ENCODE measurements at regions of chr1 and their contacts with region 1.

Region 1: DNA sequence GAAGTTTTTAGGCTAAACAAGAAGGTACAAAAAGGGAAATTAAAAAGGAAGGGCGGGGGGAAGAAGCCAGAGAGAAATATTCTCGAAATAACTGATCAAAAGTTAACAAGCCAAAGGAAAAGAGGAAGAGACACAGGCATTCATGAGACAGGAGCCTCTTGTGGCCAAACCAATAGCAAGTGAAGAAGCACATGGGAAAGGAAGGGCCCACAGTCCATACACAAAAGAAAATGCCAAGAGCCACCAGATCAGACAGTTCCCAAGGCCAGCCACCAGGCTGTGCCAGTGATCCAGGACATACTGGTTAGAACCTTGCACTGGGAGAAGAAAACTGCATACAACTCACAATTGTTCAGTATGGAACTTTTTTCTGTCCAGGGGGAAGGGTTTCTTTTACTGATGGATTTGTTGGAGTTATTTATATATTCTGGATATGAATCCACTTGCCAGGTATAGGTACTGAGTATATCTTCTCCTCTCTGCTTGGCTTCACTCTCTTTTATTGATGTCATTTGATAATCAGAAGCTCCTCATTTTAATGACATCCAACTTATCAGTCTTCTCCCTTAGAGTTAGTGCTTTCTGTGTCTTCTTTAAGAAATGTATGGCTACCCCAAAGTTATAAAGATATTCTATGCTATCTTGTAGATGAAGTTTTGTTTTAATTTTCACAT is 76.8 kb downstream of the CD46 start:
- DNase-seq: no peak
- ATAC-seq: no peak
- H3K4me3 Mint-ChIP-seq: peak overlapping the region; percentile 5
- H3K27ac Mint-ChIP-seq: peak overlapping the region; percentile 57
- H3K4me1 Mint-ChIP-seq: peaks cover 97% of the 10 kb centered on the region
- H3K27me3 Mint-ChIP-seq: peaks cover 2% of the 10 kb centered on the region
- CTCF ChIP-seq: no peak

Region 2: GRCh38 chr1:207097871-207098324 is 730.7 kb before region 1 on chr1:
- CTCF ChIA-PET with region 1: no interaction called
- POLR2A ChIA-PET with region 1: no interaction called
- intact Hi-C with region 1: no loop called
- DNase-seq: no peak
- ATAC-seq: peak; percentile 37
- H3K4me3 Mint-ChIP-seq: no peak overlapping the region
- H3K27ac Mint-ChIP-seq: no peak overlapping the region
- H3K4me1 Mint-ChIP-seq: no peaks in the 10 kb centered on the region
- H3K27me3 Mint-ChIP-seq: peaks cover 9% of the 10 kb centered on the region
- CTCF ChIP-seq: no peak

Region 3: DNA sequence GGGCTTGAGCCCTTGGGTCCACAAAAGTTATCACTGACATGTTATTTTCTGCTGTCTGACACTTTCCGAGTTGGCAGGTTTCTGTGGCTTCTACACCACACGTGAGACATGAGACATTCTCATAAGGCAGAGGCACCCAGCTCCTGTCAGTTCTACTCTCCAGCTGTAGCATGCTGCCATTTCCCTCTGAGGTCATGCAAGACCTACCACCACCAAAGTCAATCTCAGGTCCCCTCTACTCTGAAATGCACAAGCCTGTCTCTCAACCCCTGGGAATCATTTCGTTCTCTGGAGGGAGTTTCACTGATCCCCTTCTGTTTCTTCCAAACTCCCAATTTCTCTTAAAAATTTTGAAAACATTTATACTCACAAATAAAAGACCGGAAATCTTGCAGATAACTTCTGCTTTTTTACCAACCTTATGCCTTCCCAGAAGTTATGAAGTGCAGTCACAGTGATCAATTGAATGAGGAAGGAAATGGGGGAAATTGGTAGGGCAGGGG is 414.0 kb before region 1 on chr1:
- CTCF ChIA-PET with region 1: no interaction called
- POLR2A ChIA-PET with region 1: no interaction called
- intact Hi-C with region 1: loop called (anchors 10 kb)
- DNase-seq: no peak
- ATAC-seq: peak; percentile 76
- H3K4me3 Mint-ChIP-seq: peak overlapping the region; percentile 76
- H3K27ac Mint-ChIP-seq: peak overlapping the region; percentile 96
- H3K4me1 Mint-ChIP-seq: peaks cover 83% of the 10 kb centered on the region
- H3K27me3 Mint-ChIP-seq: no peaks in the 10 kb centered on the region
- CTCF ChIP-seq: no peak

Region 4: DNA sequence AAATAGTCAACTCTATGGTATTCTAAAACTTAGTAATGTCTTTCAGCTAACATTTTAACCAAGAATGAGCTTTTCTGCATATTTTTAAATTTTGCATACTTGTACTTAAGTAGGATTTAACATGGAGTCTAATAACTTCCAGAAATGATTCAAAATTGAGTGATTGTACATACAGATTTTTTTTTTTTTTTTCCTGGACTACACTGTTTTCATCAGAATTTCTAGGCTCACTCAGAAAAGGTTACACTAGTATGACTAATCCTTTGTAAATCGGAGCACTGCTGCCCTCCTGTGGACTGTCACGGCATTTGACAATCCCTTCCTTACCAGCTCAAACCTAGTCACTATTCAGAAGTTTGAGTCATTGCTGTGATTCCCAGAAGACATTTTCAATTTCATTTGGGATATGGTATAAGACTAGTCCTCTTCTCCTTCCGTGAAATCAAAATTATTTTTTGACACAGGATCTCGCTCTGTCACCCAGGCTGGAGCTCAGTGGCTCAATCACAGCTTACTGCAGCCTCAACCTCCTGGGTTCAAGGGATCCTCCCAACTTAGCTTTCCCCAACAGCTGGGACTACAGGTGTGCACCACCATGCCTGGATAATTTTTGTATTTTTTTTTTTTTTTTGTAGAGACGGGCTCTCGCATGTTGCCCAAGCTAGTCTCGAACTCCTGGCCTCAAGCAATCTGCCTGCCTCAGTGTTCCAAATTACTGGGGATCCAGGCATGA is 31.2 kb before region 1 on chr1:
- CTCF ChIA-PET with region 1: interaction called, 59 read pairs
- POLR2A ChIA-PET with region 1: interaction called, 45 read pairs
- intact Hi-C with region 1: loop called (anchors 1 kb)
- DNase-seq: peak; percentile 54
- ATAC-seq: peak; percentile 92
- H3K4me3 Mint-ChIP-seq: no peak overlapping the region
- H3K27ac Mint-ChIP-seq: peak overlapping the region; percentile 27
- H3K4me1 Mint-ChIP-seq: peaks cover 30% of the 10 kb centered on the region
- H3K27me3 Mint-ChIP-seq: no peaks in the 10 kb centered on the region
- CTCF ChIP-seq: peak; percentile 90

Region 5: DNA sequence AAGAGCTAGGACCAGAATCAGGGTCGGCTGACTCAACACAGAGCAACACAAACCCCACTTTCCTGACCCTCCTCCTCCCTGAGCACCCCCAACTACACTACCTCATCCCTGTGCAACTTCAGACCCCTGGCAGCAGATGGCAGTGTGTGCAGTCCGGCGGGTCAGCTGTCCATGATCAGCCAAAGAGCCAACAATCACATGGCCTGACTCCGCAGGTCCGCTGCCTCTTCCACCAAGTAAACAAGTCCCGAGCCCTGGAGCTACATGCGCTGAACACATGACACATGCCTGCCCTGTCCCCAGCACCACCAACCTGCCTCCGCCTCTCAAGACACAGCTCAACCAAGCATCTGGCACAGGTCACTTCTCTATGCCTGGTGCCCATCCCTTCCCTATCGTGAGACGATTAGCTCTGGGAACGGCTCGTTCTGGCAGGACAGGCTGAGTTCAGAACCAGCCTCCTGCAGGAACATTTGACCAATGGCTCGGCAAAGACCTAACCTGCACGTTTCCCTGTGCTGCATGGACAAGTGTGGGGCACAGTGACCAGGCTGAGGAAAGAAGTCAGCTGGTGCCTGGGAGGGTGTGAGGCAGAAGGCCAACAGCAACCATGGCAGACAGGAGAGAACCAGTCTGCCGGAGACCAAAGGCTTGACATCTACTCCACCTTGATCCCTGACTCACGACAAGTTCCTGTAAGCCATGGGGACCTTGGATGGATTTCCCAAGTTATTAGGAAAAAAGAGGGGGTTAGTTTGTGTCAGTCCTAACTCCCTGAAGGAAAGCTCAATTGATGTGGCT is 16.5 kb before region 1 on chr1:
- CTCF ChIA-PET with region 1: interaction called, 17 read pairs
- POLR2A ChIA-PET with region 1: interaction called, 73 read pairs
- intact Hi-C with region 1: loop called (anchors 2 kb)
- DNase-seq: no peak
- ATAC-seq: no peak
- H3K4me3 Mint-ChIP-seq: no peak overlapping the region
- H3K27ac Mint-ChIP-seq: no peak overlapping the region
- H3K4me1 Mint-ChIP-seq: peaks cover 90% of the 10 kb centered on the region
- H3K27me3 Mint-ChIP-seq: no peaks in the 10 kb centered on the region
- CTCF ChIP-seq: no peak

Region 6: DNA sequence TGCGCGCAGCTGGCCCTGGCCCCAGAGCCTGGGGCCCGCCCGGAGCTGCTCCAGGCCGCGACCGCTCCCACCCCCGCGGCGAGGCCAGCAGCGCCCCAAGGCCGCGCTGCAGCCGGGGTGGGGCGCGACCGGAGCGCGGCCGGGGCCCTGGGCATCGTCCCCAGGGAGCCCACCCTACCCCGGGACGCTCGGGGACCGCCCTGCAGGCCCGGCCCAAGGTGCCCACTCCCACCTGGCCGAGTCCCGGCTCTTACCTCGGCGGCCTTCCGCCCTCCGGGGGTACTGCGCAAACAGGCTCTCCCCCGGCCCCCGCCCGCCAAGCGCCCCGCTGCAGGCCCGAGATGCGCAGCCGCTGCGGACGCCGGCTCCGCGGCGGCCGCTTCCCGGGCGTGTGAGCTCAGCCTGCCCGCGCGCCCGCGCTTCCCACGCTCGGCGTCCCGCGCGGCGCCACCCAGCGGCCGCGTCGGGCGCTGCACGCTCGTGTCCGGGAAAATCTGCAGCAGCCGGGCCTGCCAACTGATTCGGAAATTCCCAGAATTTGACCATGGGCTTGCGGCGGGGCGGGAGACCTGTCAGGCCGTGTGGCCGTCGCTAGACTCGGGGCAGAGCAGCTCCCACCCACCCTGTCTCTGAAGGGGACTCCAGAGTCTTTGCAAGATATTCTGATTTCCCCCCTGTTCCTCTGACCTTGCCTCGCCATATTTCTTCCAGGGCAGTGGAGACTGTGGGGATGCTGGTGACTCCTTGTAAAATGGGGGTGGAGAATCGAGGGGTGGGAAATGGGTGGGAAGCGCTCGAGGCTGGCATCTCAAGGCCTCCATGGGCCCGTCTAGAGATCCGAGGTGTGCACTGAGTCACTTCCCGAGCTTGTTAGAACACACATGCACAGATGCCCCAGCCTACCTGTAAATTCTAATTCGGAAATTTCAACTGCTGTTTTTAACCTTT is 40.4 kb after region 1 on chr1:
- CTCF ChIA-PET with region 1: interaction called, 397 read pairs
- POLR2A ChIA-PET with region 1: interaction called, 547 read pairs
- intact Hi-C with region 1: loop called (anchors 1 kb)
- DNase-seq: peak; percentile 74
- ATAC-seq: peak; percentile 83
- H3K4me3 Mint-ChIP-seq: peak overlapping the region; percentile 91
- H3K27ac Mint-ChIP-seq: peak overlapping the region; percentile 86
- H3K4me1 Mint-ChIP-seq: peaks cover 86% of the 10 kb centered on the region
- H3K27me3 Mint-ChIP-seq: no peaks in the 10 kb centered on the region
- CTCF ChIP-seq: peak; percentile 34

Region 7: GRCh38 chr1:207941665-207942064 is 113.0 kb after region 1 on chr1:
- CTCF ChIA-PET with region 1: interaction called, 3 read pairs
- POLR2A ChIA-PET with region 1: interaction called, 10 read pairs
- intact Hi-C with region 1: no loop called
- DNase-seq: no peak
- ATAC-seq: no peak
- H3K4me3 Mint-ChIP-seq: no peak overlapping the region
- H3K27ac Mint-ChIP-seq: no peak overlapping the region
- H3K4me1 Mint-ChIP-seq: peaks cover 5% of the 10 kb centered on the region
- H3K27me3 Mint-ChIP-seq: peaks cover 5% of the 10 kb centered on the region
- CTCF ChIP-seq: no peak